ENCODE measurements at regions of chr14 and their contacts with region 1.

Region 1: GRCh38 chr14:75982266-75983018 is 647 bp upstream of the TGFB3 start:
- DNase-seq: peak; percentile 84 to 90 (median 90)
- ATAC-seq: peak; percentile 82
- H3K4me3 ChIP-seq: peak overlapping the region; percentile 43
- H3K4me1 ChIP-seq: peaks cover 5% of the 10 kb centered on the region
- CTCF ChIP-seq: peak; percentile 47

Region 2: GRCh38 chr14:75709207-75709812 is 273.1 kb before region 1 on chr14:
- intact Hi-C with region 1: loop called (anchors 5 to 10 kb)
- DNase-seq: peak; percentile 47 to 89 (median 61)
- ATAC-seq: peak; percentile 85
- H3K4me3 ChIP-seq: no peak overlapping the region
- H3K4me1 ChIP-seq: no peaks in the 10 kb centered on the region
- CTCF ChIP-seq: peak; percentile 61

Region 3: DNA sequence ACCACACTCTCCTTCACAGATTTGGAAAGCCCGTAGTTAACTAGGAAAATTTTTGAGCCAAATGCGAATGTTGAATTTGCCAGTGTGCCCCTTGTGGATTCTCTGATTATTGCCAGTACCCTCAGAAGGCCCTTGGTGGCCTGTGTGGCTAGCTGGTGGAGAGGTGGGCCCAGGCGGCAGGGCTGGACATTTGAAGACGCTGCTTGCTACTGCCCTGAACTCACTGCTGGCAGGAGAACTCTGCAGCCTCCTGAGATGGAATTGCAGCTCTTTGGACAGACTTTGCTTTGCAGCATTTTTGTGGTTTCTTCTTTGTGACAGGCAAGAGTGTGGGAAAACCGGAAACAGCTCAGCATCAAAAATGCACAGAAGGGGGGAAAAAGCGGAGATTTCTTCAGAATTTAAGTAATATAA is 98.2 kb before region 1 on chr14:
- intact Hi-C with region 1: no loop called
- DNase-seq: no peak
- ATAC-seq: no peak
- H3K4me3 ChIP-seq: no peak overlapping the region
- H3K4me1 ChIP-seq: no peaks in the 10 kb centered on the region
- CTCF ChIP-seq: no peak

Region 4: GRCh38 chr14:75911883-75912282 is 70.6 kb before region 1 on chr14:
- intact Hi-C with region 1: loop called in 1 of 2 experiments (anchors 5 kb)
- DNase-seq: peak in 2 of 3 donors; percentile 66 to 74
- ATAC-seq: peak; percentile 75
- H3K4me3 ChIP-seq: no peak overlapping the region
- H3K4me1 ChIP-seq: peaks cover 9% of the 10 kb centered on the region
- CTCF ChIP-seq: no peak